K562 (cell line): ENCODE measurements at regions of chr6 and their contacts with region 1.

Region 1: GRCh38 chr6:7813704-7814103 is 87.8 kb downstream of the BMP6 start:
- DNase-seq: peak; percentile 33 to 60 (median 47)
- ATAC-seq: peak; percentile 98
- H3K4me3 ChIP-seq: no peak overlapping the region
- H3K27ac ChIP-seq: no peak overlapping the region
- H3K4me1 ChIP-seq: no peaks in the 10 kb centered on the region
- H3K27me3 ChIP-seq: peaks cover 15 to 16% of the 10 kb centered on the region in 2 experiments; a peak in 4 of 5 replicates
- CTCF ChIP-seq: peak; percentile 68 to 74 (median 70)
- EP300 ChIP-seq: no peak
- POLR2A ChIP-seq: no peak
- RAD21 ChIP-seq: peak; percentile 36 to 71

Region 2: GRCh38 chr6:7673063-7673536 is 140.6 kb before region 1 on chr6:
- CTCF ChIA-PET with region 1: interaction called, 3 read pairs
- POLR2A ChIA-PET with region 1: interaction called, 3 read pairs
- in situ Hi-C with region 1: no loop called
- intact Hi-C with region 1: loop called (anchors 2 kb)
- DNase-seq: peak; percentile 48 to 64 (median 60)
- ATAC-seq: peak; percentile 89
- H3K4me3 ChIP-seq: no peak overlapping the region
- H3K27ac ChIP-seq: no peak overlapping the region
- H3K4me1 ChIP-seq: peaks cover 10 to 11% of the 10 kb centered on the region in 2 experiments
- H3K27me3 ChIP-seq: peaks cover 2 to 19% of the 10 kb centered on the region in 2 experiments; a peak in 3 of 5 replicates
- CTCF ChIP-seq: peak; percentile 20 to 58 (median 33); a peak in 3 of 6 replicates
- EP300 ChIP-seq: no peak
- POLR2A ChIP-seq: no peak
- RAD21 ChIP-seq: peak in 1 of 2 experiments; percentile 55; a peak in 2 of 4 replicates